ENCODE measurements at regions of chr17 and their contacts with region 1.

Region 1: GRCh38 chr17:44044067-44044466 is 22.4 kb downstream of the LSM12 start:
- DNase-seq: peak; percentile 33
- H3K4me3 ChIP-seq: no peak overlapping the region
- H3K27ac ChIP-seq: no peak overlapping the region
- H3K4me1 ChIP-seq: peaks cover 27% of the 10 kb centered on the region
- H3K27me3 ChIP-seq: no peaks in the 10 kb centered on the region
- CTCF ChIP-seq: no peak

Region 2: DNA sequence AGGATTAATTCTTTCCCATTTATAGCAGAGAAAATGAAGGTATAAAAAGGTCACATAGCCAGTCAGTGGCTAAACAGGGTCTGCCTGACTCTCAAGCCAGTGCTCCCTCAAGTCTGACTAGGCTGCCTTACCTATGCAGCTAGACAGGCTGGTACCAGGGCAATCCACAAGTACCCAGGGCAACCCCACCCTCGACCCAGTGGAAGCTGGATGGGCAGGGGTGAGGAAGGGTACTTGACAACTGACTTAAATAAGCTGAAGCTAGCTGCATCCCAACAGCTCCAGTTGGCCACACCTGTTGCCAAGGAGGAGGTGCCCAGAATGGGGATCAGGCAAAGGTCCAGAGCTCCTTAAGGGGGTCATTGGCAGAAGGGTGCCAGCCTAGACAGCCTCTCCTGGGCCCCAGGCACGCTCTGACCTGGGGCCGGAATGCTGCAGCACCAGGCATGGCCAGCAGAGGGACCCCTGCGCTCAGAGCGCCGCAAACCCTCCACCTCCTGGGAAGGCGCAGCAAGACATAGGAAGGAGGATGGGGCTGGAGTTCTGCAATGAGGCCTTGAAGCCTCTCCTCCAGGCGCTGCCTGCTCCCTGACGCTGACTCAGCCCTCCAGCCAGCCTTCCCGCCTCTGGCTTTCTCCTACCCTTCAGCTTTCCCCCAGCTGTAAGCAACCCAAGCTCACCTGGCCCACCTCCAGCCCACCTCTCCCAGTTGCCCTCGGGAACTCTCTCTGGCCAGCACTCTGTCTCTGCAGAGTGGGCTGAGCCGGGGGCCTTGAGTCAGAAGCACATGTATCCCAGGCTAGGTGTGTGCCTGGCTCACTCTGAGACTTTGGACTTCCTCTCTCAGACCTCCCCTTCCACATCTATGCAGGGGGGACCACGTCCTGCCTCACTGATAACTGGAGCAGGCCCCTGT is 165.5 kb before region 1 on chr17:
- CTCF ChIA-PET with region 1: no interaction called
- dilution Hi-C with region 1: no loop called
- in situ Hi-C with region 1: no loop called
- intact Hi-C with region 1: loop called (anchors 1 kb)
- DNase-seq: peak; percentile 76
- H3K4me3 ChIP-seq: no peak overlapping the region
- H3K27ac ChIP-seq: no peak overlapping the region
- H3K4me1 ChIP-seq: peaks cover 4% of the 10 kb centered on the region
- H3K27me3 ChIP-seq: no peaks in the 10 kb centered on the region
- CTCF ChIP-seq: peak; percentile 93 to 99

Region 3: GRCh38 chr17:44006598-44007345 is 37.3 kb before region 1 on chr17:
- CTCF ChIA-PET with region 1: interaction called, 4 read pairs
- dilution Hi-C with region 1: no loop called
- in situ Hi-C with region 1: no loop called
- intact Hi-C with region 1: loop called (anchors 2 kb)
- DNase-seq: peak; percentile 97
- H3K4me3 ChIP-seq: peak overlapping the region; percentile 48 to 71 (median 63)
- H3K27ac ChIP-seq: peak overlapping the region; percentile 59
- H3K4me1 ChIP-seq: peaks cover 41% of the 10 kb centered on the region
- H3K27me3 ChIP-seq: no peaks in the 10 kb centered on the region
- CTCF ChIP-seq: peak; percentile 55 to 68

Measured in mammary epithelial cell (primary cell).